PC-9 (cell line): ENCODE measurements at regions of chr10 and their contacts with region 1.

Region 1: DNA sequence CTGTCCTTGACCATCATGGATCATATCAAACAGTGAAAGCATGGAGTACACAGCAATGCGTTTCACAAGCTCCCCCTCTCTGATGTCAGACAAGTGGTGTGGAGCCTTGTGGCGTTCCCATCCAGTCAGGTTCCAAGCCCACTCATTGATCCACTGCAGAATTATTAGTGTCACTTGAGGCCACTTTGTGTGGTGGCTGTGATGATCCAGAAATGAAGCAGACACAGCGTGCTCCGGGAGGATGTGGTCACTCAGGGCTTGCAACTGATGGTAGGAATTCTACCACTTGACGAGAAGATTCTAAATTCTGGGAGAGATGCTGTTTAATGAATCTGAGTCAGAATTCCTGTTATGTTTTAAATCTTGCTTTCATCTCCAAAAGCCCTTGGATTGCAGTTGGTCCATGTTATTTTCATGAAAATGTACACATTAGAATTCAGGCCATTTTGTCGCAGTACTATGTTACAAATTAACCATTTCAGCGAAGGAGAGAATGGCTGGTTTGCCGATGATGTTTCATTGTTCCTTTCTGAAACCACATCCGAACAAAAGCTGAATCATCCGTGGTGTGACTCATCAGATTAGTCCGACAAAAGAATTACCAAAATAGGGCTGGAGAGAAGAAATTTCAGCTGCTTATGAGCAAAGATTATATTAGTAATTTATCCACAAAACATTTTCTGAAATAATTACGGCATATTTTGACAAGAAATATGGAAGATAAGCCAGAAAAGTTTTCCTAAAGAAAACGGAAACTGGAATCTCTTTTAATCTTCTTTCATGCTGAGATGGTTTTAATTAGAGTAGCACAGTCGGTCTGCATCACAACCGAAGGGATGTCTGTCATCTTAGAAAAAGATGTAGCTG is 48.1 kb downstream of the INSYN2A start:
- DNase-seq: peak in 1 of 2 experiments; percentile 65
- H3K4me3 ChIP-seq: no peak overlapping the region
- H3K27ac ChIP-seq: peak overlapping the region; percentile 81
- H3K4me1 ChIP-seq: peaks cover 43% of the 10 kb centered on the region
- H3K27me3 ChIP-seq: no peaks in the 10 kb centered on the region
- CTCF ChIP-seq: no peak

Region 2: GRCh38 chr10:127012769-127013152 is 135.5 kb before region 1 on chr10:
- CTCF ChIA-PET with region 1: no interaction called
- POLR2A ChIA-PET with region 1: no interaction called
- intact Hi-C with region 1: loop called (anchors 5 kb)
- DNase-seq: peak; percentile 83 to 90
- H3K4me3 ChIP-seq: peak overlapping the region; percentile 46; the same call in 1 of the 2 replicates
- H3K27ac ChIP-seq: peak overlapping the region; percentile 91
- H3K4me1 ChIP-seq: peaks cover 31% of the 10 kb centered on the region
- H3K27me3 ChIP-seq: no peaks in the 10 kb centered on the region
- CTCF ChIP-seq: no peak

Region 3: DNA sequence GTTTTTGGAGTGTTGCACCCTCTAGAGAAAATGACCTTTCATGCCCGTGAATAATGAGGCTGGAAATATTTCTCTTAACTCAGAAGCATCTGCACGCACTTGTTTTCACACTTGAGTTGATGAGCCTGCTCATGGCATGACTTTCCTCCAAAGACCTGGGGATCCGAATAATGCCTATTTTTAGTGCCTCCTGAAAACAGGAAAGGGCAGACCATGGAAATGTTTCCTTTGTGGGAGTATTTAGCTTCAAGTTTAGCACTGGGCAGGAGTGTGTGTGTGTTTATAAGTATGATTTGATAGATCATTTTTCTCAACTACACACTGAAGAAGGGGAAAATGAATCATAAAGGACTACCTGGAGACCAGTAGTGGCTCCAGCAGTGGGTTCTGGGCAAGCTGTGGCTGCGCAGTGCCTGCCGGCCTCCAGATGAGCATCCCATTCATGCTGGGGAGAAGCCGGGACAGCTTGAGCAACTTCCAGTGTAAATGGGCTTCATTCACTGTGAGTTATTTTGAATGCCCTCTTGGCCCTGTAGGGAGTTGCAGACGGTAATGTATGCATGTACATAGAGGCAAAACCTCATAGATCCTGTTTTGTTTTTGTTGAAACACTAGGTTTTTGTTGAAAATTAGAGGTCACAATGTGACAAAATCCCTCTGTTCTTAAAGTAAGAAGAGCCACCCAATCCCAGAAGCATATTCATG is 165.8 kb after region 1 on chr10:
- CTCF ChIA-PET with region 1: no interaction called
- POLR2A ChIA-PET with region 1: no interaction called
- intact Hi-C with region 1: no loop called
- DNase-seq: no peak
- H3K4me3 ChIP-seq: no peak overlapping the region
- H3K27ac ChIP-seq: no peak overlapping the region
- H3K4me1 ChIP-seq: no peaks in the 10 kb centered on the region
- H3K27me3 ChIP-seq: no peaks in the 10 kb centered on the region
- CTCF ChIP-seq: no peak